ENCODE measurements at regions of chr18 and their contacts with region 1.

Region 1: DNA sequence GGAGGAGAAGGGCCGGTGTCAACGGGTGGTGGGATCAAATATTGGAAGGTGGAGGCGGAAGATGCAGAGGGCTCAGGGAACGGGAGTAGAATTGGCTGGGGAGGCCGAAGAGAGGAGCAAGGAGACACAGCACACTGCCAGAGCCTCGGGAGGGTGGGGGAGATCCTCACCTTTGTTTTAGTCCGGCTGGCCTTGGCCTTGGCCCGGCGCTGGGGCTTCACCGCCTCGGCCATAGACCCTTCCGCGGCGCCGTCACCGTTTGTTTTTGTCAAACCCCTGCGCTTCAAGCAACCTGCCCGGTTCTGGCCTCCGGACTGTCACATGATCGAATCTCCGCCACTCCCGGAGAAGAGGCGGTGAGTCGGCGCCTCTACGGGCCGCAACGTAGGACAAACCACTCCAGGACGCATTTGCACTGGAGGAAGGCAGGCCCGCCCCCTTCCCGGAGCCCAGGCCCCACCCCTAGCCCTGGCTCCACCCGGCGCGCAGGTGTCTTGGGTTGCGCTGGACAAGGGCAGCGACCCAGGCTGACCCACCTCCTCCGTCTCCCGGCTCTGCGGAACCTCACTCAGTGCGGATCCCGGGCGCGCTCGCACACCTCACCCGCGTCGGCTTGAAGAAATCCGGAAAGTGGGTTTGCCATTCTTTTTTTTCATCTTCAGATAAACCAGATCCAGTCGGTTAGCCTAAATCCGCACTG is at the start of gene EPG5:
- DNase-seq: peak; percentile 73 to 91 (median 90)
- ATAC-seq: peak; percentile 98
- H3K4me3 ChIP-seq: peak within 1 kb of the TSS; percentile 79
- H3K4me3 Mint-ChIP-seq: peak within 1 kb of the TSS; percentile 94 to 100 (median 97)
- H3K27ac ChIP-seq: peak within 1 kb of the TSS; percentile 86
- H3K27ac Mint-ChIP-seq: peak within 1 kb of the TSS; percentile 84 to 98 (median 97)
- H3K4me1 ChIP-seq: peaks cover 14 to 25% of the 10 kb centered on the region in 2 donors
- H3K4me1 Mint-ChIP-seq: peaks cover 33 to 55% (median 47%) of the 10 kb centered on the region in 7 donors
- H3K27me3 ChIP-seq: no peaks in the 10 kb centered on the region
- H3K27me3 Mint-ChIP-seq: no peaks in the 10 kb centered on the region
- total RNA-seq, gene EPG5: 26.0 to 54.8 (median 44.7) TPM

Region 2: DNA sequence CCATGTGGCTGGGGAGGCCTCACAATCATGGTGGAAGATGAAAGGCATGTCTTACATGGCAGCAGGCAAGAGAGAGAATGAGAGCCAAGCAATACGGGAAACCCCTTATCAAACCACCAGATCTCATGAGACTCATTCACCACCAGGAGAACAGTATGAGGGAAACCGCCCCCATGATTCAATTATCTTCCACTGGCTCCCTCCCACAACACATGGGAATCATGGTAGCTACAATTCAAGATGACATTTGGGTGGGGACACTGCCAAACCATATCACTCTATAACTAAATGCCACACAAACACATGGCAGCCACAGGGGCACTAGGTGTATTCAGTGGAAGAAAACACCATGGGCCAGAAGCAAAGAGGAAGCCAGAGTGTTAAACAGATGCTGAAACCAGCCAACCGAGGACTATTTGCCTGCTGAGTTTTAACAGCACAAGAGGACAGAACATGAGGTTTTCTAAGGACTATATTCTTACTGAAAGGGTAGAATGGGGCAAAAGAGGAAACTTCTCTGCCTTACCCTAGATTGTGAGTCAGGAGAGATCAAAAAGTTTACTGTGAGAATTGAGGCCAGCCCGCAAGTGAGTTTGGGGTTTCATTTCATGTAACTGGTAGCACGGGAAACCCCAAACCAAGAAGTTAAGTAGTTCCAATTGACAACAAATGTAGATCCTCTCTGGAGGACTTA is 92.5 kb before region 1 on chr18:
- CTCF ChIA-PET with region 1: no interaction called
- POLR2A ChIA-PET with region 1: no interaction called
- intact Hi-C with region 1: loop called in 1 of 2 experiments (anchors 2 kb)
- DNase-seq: peak in 7 of 9 donors; percentile 31 to 63 (median 46)
- ATAC-seq: peak; percentile 88
- H3K4me3 ChIP-seq: no peak overlapping the region
- H3K4me3 Mint-ChIP-seq: peak overlapping the region in 9 of 10 donors; percentile 4 to 77 (median 49)
- H3K27ac ChIP-seq: peak overlapping the region; percentile 20
- H3K27ac Mint-ChIP-seq: peak overlapping the region in 8 of 9 donors; percentile 13 to 89 (median 62)
- H3K4me1 ChIP-seq: peaks cover 12 to 14% of the 10 kb centered on the region in 2 donors
- H3K4me1 Mint-ChIP-seq: peaks cover 18 to 30% (median 24%) of the 10 kb centered on the region in 7 donors
- H3K27me3 ChIP-seq: no peaks in the 10 kb centered on the region
- H3K27me3 Mint-ChIP-seq: no peaks in the 10 kb centered on the region

Region 3: GRCh38 chr18:45951016-45951714 is 16.0 kb before region 1 on chr18:
- CTCF ChIA-PET with region 1: no interaction called
- POLR2A ChIA-PET with region 1: no interaction called
- intact Hi-C with region 1: no loop called
- DNase-seq: no peak
- ATAC-seq: no peak
- H3K4me3 ChIP-seq: no peak overlapping the region
- H3K4me3 Mint-ChIP-seq: no peak overlapping the region
- H3K27ac ChIP-seq: no peak overlapping the region
- H3K27ac Mint-ChIP-seq: no peak overlapping the region
- H3K4me1 ChIP-seq: no peaks in the 10 kb centered on the region
- H3K4me1 Mint-ChIP-seq: peaks cover 0 to 46% (median 27%) of the 10 kb centered on the region in 7 donors
- H3K27me3 ChIP-seq: no peaks in the 10 kb centered on the region
- H3K27me3 Mint-ChIP-seq: no peaks in the 10 kb centered on the region

Region 4: GRCh38 chr18:46028536-46028891 is 61.4 kb after region 1 on chr18:
- CTCF ChIA-PET with region 1: no interaction called
- POLR2A ChIA-PET with region 1: no interaction called
- intact Hi-C with region 1: loop called (anchors 1 to 5 kb)
- DNase-seq: no peak
- ATAC-seq: no peak
- H3K4me3 ChIP-seq: peak overlapping the region; percentile 89
- H3K4me3 Mint-ChIP-seq: peak overlapping the region; percentile 80 to 96 (median 92)
- H3K27ac ChIP-seq: peak overlapping the region; percentile 54
- H3K27ac Mint-ChIP-seq: peak overlapping the region in 8 of 9 donors; percentile 25 to 86 (median 76)
- H3K4me1 ChIP-seq: peaks cover 0 to 5% of the 10 kb centered on the region in 2 donors
- H3K4me1 Mint-ChIP-seq: peaks cover 7 to 14% (median 13%) of the 10 kb centered on the region in 7 donors
- H3K27me3 ChIP-seq: no peaks in the 10 kb centered on the region
- H3K27me3 Mint-ChIP-seq: peaks cover 0 to 14% (median 0%) of the 10 kb centered on the region in 5 donors

Region 5: GRCh38 chr18:46104128-46104911 is 137.2 kb after region 1 on chr18 and contains the start of gene HAUS1:
- CTCF ChIA-PET with region 1: no interaction called
- POLR2A ChIA-PET with region 1: no interaction called
- intact Hi-C with region 1: loop called (anchors 1 kb)
- DNase-seq: peak; percentile 62 to 87 (median 69)
- ATAC-seq: peak; percentile 98
- H3K4me3 ChIP-seq: peak within 1 kb of the TSS; percentile 89
- H3K4me3 Mint-ChIP-seq: peak within 1 kb of the TSS; percentile 93 to 99 (median 98)
- H3K27ac ChIP-seq: peak within 1 kb of the TSS; percentile 80
- H3K27ac Mint-ChIP-seq: peak within 1 kb of the TSS; percentile 73 to 97 (median 91)
- H3K4me1 ChIP-seq: peaks cover 5% of the 10 kb centered on the region in 2 donors
- H3K4me1 Mint-ChIP-seq: peaks cover 11 to 37% (median 26%) of the 10 kb centered on the region in 7 donors
- H3K27me3 ChIP-seq: no peaks in the 10 kb centered on the region
- H3K27me3 Mint-ChIP-seq: no peaks in the 10 kb centered on the region
- total RNA-seq, gene HAUS1: 10.4 to 47.2 (median 15.2) TPM